Breast epithelium (tissue), 4 donors: ENCODE measurements at regions of chr4 and their contacts with region 1.

Region 1: DNA sequence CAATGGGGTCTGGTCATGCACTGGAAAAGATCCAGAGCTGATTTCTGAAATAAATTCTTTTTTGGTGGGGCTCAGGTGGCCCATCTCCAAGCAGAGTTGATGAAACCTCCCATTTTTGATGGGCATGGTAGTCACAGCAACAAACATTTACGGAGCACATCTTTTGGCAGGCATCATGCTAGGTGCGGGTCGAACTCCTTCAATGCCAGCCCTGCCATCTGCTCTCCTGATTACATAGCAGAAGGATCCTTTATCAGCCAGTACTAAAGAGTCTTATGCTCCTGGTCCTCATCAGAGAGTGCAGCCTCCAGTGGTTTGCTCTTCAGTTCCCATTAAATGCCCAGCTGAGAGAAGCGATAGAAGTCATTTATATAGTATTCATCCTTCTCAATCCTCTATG is 121.7 kb downstream of the GRXCR1 start:
- DNase-seq: no peak
- H3K4me3 ChIP-seq: no peak overlapping the region
- H3K27ac ChIP-seq: no peak overlapping the region
- H3K4me1 ChIP-seq: no peaks in the 10 kb centered on the region
- H3K27me3 ChIP-seq: no peaks in the 10 kb centered on the region
- CTCF ChIP-seq: no peak
- POLR2A ChIP-seq: no peak

Region 2: DNA sequence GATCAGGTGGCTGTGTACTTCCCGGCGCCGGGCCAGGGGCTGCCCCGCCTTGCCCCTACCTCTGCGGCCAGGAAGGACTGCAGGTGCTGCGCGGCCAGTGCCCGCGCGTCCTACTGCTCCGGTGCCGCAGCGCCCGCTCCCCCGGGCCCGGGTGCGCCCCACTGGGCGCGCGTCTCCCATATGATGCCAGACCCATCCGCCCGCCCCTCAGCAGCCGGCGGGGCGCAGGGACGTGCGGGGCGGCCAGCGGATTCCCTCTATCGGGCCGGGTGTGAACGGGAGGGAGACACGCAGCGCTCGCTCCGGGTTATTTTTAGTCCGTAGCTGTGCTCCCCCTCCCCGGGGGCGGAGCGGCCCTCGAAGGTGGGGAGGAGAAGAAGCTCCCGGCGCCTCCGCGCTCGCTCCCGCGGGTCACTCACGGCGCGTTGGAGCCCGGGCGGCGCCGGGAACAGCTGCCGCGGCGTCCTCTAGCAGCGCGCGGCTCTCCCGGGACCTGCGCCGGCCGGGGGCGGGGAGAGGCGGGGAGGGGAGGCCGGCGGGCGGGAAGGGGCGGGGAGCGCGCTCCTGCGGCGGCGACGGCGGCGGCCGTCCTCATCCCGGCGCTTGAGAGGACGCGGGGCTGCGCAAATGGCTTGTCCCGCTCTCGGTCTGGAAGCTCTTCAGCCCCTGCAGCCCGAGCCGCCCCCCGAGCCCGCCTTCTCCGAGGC is 1653.9 kb before region 1 on chr4:
- intact Hi-C with region 1: no loop called
- DNase-seq: peak; percentile 30 to 59
- H3K4me3 ChIP-seq: peak overlapping the region; percentile 78 to 91 (median 90)
- H3K27ac ChIP-seq: peak overlapping the region; percentile 59 to 76
- H3K4me1 ChIP-seq: no peaks in the 10 kb centered on the region
- H3K27me3 ChIP-seq: no peaks in the 10 kb centered on the region
- CTCF ChIP-seq: no peak
- POLR2A ChIP-seq: no peak

Region 3: GRCh38 chr4:42541647-42542046 is 472.6 kb before region 1 on chr4:
- intact Hi-C with region 1: no loop called
- DNase-seq: no peak
- H3K4me3 ChIP-seq: no peak overlapping the region
- H3K27ac ChIP-seq: no peak overlapping the region
- H3K4me1 ChIP-seq: no peaks in the 10 kb centered on the region
- H3K27me3 ChIP-seq: no peaks in the 10 kb centered on the region
- CTCF ChIP-seq: no peak
- POLR2A ChIP-seq: no peak

Region 4: DNA sequence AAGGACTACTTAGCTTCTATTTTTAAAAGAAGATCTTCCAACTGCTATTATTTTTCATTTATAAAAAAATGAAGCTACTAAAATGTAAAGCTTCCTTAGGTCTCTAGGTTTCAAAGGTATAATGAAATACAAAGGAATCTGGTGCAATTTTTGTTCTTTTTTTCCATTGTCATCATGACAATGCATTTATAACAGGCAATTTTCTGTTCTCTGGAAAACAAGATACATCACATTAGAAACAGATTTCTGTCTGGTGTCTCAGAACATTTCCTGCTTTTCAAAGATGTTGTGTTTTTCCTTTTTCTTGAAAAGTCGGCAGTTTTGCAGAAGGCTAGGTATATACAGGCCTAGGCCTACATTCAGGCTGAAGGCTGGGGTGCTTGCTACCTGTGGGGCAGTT is 293.7 kb before region 1 on chr4:
- intact Hi-C with region 1: loop called (anchors 10 kb)
- DNase-seq: no peak
- H3K4me3 ChIP-seq: no peak overlapping the region
- H3K27ac ChIP-seq: no peak overlapping the region
- H3K4me1 ChIP-seq: no peaks in the 10 kb centered on the region
- H3K27me3 ChIP-seq: no peaks in the 10 kb centered on the region
- CTCF ChIP-seq: no peak
- POLR2A ChIP-seq: no peak

Region 5: DNA sequence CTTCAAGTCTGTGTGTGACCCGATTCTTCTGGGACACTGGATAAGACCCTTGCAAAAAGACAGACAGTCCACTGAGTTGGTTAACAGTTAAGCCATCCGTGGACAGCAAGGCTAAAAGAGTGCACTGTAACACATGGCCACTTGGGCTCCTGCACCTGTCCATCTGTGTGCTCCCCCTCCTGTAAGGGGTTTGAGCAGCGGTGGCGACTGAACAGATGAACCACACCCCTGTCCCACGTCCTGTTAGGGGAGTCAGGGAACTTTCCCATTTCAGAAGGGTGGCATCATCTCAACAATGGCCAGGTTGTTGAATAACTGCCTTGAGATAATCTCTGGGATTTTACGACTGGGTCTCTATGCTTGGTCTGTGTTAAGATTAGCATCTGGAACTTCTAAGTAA is 56.8 kb after region 1 on chr4:
- intact Hi-C with region 1: loop called (anchors 2 kb)
- DNase-seq: no peak
- H3K4me3 ChIP-seq: no peak overlapping the region
- H3K27ac ChIP-seq: no peak overlapping the region
- H3K4me1 ChIP-seq: no peaks in the 10 kb centered on the region
- H3K27me3 ChIP-seq: no peaks in the 10 kb centered on the region
- CTCF ChIP-seq: no peak
- POLR2A ChIP-seq: no peak

Region 6: DNA sequence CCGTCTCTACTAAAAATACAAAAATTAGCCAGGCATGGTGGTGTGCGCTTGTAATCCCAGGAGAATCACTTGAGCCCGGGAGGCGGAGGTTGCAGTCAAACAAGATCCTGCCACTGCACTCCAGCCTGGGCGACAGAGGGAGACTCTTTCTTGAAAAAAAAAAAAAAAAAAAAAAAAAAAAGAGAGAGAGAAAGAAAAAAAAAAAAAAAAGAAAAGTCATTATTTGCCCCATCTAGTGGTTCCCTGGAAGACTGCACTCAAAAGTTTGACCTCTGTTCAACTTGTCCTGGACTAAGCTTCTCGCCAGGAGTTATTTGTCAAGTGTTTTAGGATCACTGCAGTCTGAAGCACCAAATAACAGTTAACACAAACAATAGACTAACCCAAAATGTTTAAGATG is 1479.7 kb after region 1 on chr4:
- intact Hi-C with region 1: no loop called
- DNase-seq: no peak
- H3K4me3 ChIP-seq: no peak overlapping the region
- H3K27ac ChIP-seq: no peak overlapping the region
- H3K4me1 ChIP-seq: no peaks in the 10 kb centered on the region
- H3K27me3 ChIP-seq: no peaks in the 10 kb centered on the region
- CTCF ChIP-seq: no peak
- POLR2A ChIP-seq: no peak